Activated B cell treated with CpG ODN at 0.5 μM for 24 hours (primary cell): ENCODE measurements at regions of chr4 and their contacts with region 1.

Region 1: DNA sequence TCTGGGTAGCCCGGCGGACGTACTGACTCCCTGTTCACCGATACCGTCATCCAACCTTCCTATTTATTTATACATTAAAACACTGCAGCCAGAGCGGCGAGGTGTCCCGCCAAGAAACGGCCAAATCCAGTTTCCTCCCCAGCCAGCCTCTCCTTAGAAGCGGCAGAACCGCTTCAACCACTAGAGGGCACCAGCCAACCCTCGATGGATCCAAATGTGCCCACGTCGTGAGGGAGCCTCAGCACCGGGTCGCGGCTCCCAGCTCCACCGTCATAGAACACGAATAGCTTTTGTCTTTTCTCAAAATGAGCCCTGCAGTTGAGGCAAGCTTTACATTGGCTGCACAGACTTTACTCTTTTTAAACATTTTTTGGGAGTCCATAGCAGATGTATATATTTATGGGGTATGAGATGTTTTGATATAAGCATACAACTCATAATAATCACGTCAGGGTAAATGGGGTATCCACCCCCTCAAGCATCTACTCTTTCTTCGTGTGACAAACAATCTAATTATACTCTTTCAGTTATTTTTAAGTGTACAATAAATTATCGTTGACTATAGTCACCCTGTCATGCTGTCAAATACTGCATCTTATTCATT is 13.0 kb upstream of the HELT start:
- DNase-seq: peak; percentile 60
- ATAC-seq: peak; percentile 90
- H3K4me3 Mint-ChIP-seq: peak overlapping the region; percentile 48
- H3K27ac Mint-ChIP-seq: no peak overlapping the region
- H3K4me1 Mint-ChIP-seq: peaks cover 9% of the 10 kb centered on the region
- H3K27me3 Mint-ChIP-seq: peaks cover 51% of the 10 kb centered on the region
- CTCF ChIP-seq: peak; percentile 80

Region 2: DNA sequence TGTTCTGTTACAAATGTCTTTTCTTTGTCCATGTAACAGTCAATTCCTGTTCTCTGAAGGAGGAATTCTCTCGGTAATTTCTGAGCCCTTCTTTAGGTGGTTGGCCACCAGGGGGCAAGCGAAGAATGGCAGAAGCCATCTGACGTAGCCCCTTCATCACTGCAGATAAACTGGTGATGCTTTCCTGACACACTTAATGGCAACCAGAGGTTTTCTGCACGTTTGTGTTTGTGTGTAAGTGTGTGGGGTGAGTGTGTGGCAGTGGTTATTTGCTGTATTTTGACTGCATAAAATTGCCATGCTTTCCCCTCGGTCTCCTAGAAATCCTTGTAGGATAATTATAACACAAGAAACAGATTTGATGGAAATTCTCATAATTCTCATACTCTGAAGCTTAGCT is 1165.0 kb before region 1 on chr4:
- CTCF ChIA-PET with region 1: no interaction called
- POLR2A ChIA-PET with region 1: no interaction called
- intact Hi-C with region 1: loop called (anchors 5 kb)
- DNase-seq: peak; percentile 29
- ATAC-seq: no peak
- H3K4me3 Mint-ChIP-seq: no peak overlapping the region
- H3K27ac Mint-ChIP-seq: no peak overlapping the region
- H3K4me1 Mint-ChIP-seq: no peaks in the 10 kb centered on the region
- H3K27me3 Mint-ChIP-seq: peaks cover 13% of the 10 kb centered on the region
- CTCF ChIP-seq: peak; percentile 52

Region 3: DNA sequence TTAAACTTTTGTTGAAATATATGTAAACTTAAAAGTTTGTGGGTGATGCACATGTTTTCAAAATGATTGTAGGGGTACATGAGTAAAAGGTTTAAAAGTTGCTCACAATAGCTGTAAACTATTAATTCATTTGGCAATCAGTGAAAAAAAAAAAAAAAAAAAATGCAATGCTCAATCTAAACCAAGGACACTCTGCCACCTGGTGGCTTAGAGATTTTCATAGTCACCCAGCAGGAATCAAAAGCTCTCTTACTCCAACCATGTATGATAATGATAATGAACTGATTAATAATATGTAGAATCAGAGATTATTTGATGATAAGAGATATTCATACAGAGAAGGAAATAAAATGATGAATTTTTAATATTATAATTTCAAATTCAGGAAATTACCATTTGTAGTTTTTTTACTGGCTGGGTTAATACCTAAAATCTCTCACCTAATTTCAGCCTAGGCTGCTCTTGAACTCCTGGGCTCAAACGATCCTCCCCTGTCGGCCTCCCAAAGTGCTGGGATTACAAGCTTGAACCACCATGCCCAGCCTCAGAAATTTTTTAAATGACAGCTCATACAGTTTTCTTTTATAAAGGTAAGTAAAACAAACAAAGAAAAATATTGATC is 90.8 kb after region 1 on chr4:
- CTCF ChIA-PET with region 1: no interaction called
- POLR2A ChIA-PET with region 1: no interaction called
- intact Hi-C with region 1: loop called (anchors 1 kb)
- DNase-seq: no peak
- ATAC-seq: no peak
- H3K4me3 Mint-ChIP-seq: no peak overlapping the region
- H3K27ac Mint-ChIP-seq: no peak overlapping the region
- H3K4me1 Mint-ChIP-seq: no peaks in the 10 kb centered on the region
- H3K27me3 Mint-ChIP-seq: peaks cover 18% of the 10 kb centered on the region
- CTCF ChIP-seq: no peak

Region 4: DNA sequence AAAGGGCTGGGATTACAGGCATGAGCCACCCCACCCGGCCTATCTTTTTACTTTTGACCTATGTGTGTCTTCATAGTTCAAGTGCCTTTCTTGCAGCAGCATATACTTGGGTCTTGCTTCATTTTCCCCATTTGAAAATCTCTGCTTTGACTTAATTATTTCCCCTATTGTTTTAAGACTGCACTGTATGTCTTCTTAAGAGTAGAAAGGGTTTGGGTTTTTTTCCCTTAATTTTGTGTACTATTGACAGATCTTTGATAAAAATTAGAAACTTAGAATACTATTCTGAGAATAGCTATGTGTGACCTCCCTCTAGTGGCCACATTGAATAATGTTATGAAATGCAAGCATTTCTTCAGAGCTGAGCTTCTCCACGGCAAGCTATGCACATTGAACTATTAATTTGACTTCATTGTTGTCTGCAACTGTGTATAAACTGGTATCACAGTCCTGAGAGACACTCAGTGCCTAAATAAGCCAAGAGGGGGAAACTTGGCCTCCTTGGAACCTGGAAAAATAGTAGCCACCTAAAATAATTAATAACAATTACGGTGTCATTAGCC is 129.1 kb after region 1 on chr4:
- CTCF ChIA-PET with region 1: interaction called, 6 read pairs
- POLR2A ChIA-PET with region 1: no interaction called
- intact Hi-C with region 1: loop called (anchors 1 kb)
- DNase-seq: no peak
- ATAC-seq: peak; percentile 56
- H3K4me3 Mint-ChIP-seq: no peak overlapping the region
- H3K27ac Mint-ChIP-seq: no peak overlapping the region
- H3K4me1 Mint-ChIP-seq: no peaks in the 10 kb centered on the region
- H3K27me3 Mint-ChIP-seq: peaks cover 9% of the 10 kb centered on the region
- CTCF ChIP-seq: no peak

Region 5: DNA sequence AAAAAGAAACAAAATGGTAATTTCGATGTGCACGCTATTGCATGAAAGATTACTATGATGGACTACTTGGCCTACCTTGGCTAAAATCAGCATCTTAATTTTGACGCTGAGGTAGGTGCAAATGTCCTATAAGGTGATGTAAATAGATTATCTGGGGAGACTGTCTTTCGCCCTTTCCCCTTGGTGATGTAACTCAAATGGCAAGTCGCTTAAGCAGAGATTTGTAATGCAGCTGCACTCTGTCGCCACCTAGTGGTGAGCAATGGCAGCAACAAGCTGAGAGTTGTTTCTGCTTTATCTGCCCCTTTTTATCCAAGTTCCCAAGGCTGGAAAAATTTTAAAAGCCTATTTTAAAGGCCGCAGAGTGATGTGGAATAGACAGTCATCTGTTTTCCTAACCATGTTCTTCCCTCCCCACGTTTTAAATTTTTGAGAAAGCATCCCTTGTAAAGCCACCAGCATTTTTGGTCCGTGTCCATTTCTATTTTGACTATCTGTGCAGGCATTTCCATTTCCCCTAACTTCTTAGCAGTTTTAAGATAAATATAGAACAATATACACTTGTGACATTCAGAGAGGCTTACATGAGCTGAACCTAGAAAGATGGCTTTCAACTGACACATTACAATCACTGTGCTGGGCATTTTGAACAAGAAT is 592.3 kb after region 1 on chr4:
- CTCF ChIA-PET with region 1: interaction called, 5 read pairs
- POLR2A ChIA-PET with region 1: no interaction called
- intact Hi-C with region 1: loop called (anchors 1 kb)
- DNase-seq: peak; percentile 49
- ATAC-seq: peak; percentile 72
- H3K4me3 Mint-ChIP-seq: no peak overlapping the region
- H3K27ac Mint-ChIP-seq: no peak overlapping the region
- H3K4me1 Mint-ChIP-seq: no peaks in the 10 kb centered on the region
- H3K27me3 Mint-ChIP-seq: peaks cover 19% of the 10 kb centered on the region
- CTCF ChIP-seq: peak; percentile 100

Region 6: DNA sequence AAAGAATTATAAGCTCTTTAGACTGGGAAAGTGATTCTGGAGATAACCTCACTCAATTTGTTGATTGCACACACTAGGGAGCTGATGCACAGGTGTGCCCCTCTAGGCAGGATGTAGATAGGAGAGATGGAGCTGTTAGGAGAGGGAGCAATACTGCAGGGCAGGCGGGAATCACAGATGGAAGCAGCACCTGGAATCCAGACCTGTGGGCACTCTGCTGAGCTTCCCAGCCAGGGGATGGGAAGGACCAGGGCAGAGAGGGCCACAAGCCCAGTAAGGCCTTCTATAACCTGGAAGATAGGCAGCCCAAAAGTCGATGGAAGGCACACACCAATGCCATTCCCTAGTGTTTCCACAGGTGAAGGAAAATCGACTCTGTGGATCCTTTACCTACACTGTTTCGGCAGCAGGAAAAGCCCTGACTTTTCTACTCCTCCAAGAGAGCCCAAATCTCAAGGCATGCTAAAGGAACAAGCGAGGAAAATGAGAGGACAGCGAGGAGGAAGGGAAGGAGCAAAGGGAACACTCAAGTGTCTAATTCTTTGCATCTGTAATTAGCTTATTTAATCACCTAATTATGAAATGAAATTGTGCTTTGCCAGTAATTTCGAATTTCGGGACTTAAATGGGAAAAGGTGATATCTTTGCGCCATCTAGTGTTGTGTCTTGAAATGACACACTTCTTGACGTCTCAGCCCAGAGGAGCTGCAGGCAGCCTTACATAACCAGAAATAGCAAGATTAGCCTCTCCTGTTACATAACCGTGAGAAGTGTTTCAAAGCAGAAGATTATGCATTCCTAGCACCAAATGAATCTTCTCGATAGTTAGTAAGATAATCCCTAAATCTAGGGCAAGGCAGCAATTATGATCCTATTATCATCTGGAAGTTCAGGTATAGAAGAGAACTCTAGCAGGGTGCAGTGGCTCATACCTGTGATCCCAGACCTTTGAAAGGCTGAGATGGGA is 1032.7 kb after region 1 on chr4:
- CTCF ChIA-PET with region 1: no interaction called
- POLR2A ChIA-PET with region 1: no interaction called
- intact Hi-C with region 1: loop called (anchors 2 kb)
- DNase-seq: no peak
- ATAC-seq: peak; percentile 60
- H3K4me3 Mint-ChIP-seq: no peak overlapping the region
- H3K27ac Mint-ChIP-seq: no peak overlapping the region
- H3K4me1 Mint-ChIP-seq: no peaks in the 10 kb centered on the region
- H3K27me3 Mint-ChIP-seq: peaks cover 28% of the 10 kb centered on the region
- CTCF ChIP-seq: peak; percentile 41